Dorsolateral prefrontal cortex (tissue), 120 donors: ENCODE measurements at regions of chr1 and their contacts with region 1.

Region 1: DNA sequence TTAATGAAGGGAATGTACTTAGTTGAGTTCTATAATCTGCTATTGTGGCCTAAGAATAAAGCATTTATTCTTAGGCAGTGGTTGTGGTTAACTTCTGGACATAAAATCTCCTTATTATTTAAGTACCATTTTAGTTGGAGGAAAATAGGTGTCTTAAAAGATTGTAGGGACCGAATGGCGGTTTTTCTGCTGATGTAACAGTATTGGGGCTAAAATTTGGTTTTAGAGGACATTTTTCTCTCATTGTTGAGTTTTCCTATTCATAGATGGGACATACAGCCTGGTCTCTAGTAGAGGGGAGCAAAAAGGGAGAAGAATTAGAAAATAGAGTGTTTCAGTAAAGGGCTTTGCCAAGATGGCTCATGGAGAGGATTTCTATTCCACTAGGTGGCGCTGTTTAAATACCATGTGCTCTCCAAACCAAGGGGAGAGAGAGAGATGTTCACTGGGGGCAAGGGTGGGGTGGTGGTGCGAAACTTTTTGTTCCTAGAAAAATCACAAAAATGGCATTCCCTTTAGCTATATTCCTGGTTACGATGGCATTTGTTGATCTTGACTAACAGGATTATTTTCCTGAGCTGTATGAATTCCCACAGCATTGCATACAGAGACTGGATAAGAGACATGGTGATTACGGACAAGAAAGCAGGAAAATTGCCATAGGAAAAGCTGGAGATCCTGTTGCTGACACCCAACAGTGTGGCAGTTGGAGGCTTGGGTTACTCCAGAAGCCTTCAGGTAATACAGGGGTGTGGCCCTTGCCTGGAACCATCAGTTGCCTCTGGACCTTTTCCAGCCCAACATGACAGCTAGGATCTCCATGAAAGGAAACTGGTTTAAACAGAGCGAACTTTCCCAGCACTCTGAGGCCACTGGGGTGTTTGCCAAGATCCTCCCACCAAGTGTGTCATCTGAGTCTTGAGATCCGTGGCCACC is 18.2 kb upstream of the FCGR2A start:
- DNase-seq: peak in 2 of 10 donors; percentile 11 to 31
- H3K4me3 ChIP-seq: peak overlapping the region in 22 of 59 donors; percentile 3 to 48 (median 27)
- H3K27ac ChIP-seq: peak overlapping the region in 1 of 59 donors; percentile 15
- H3K27me3 ChIP-seq: peaks cover 0 to 71% (median 14%) of the 10 kb centered on the region in 45 donors
- CTCF ChIP-seq: peak; percentile 60 to 90 (median 82)

Region 2: DNA sequence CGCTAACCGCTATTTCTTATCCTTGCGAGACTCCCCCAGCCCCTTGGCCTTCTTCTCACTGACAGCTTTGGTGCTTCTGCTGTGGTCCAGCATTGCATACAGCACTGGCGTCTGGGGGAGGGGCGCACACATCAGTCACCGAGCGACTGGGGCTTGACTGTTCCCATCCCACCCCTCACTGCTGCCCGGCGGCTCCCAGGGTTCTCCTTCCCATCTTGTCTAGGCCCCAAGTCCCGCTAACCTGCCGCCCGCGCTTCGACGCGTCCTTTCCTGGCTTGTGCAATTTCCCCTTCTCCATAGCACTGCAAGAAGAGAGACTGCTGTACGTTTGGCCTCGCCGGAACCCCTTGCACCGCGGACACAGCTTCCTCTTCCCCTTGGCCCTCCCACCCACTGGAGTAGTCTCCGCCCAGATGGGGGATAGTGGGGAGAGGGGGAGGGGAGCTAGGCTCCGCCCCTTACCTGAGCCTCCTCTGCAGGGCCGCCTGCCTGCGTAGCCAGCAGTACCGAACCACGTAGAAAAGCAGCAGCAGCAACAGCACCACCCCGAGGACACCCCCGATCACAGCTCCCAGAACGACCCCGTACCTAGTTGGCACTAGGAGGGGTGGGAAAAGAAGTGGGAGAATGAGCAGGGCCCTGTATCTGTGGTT is 181.1 kb before region 1 on chr1:
- intact Hi-C with region 1: no loop called
- DNase-seq: peak; percentile 53 to 90 (median 80)
- H3K4me3 ChIP-seq: peak overlapping the region; percentile 41 to 90 (median 77)
- H3K27ac ChIP-seq: peak overlapping the region in 57 of 59 donors; percentile 24 to 86 (median 74)
- H3K27me3 ChIP-seq: no peaks in the 10 kb centered on the region
- CTCF ChIP-seq: peak in 44 of 56 donors; percentile 10 to 58 (median 36)

Region 3: GRCh38 chr1:161389691-161390558 is 97.1 kb before region 1 on chr1:
- intact Hi-C with region 1: no loop called
- DNase-seq: peak; percentile 95 to 99 (median 97)
- H3K4me3 ChIP-seq: peak overlapping the region; percentile 58 to 96 (median 83)
- H3K27ac ChIP-seq: peak overlapping the region; percentile 58 to 99 (median 94)
- H3K27me3 ChIP-seq: no peaks in the 10 kb centered on the region
- CTCF ChIP-seq: peak in 9 of 56 donors; percentile 1 to 25 (median 15)

Region 4: DNA sequence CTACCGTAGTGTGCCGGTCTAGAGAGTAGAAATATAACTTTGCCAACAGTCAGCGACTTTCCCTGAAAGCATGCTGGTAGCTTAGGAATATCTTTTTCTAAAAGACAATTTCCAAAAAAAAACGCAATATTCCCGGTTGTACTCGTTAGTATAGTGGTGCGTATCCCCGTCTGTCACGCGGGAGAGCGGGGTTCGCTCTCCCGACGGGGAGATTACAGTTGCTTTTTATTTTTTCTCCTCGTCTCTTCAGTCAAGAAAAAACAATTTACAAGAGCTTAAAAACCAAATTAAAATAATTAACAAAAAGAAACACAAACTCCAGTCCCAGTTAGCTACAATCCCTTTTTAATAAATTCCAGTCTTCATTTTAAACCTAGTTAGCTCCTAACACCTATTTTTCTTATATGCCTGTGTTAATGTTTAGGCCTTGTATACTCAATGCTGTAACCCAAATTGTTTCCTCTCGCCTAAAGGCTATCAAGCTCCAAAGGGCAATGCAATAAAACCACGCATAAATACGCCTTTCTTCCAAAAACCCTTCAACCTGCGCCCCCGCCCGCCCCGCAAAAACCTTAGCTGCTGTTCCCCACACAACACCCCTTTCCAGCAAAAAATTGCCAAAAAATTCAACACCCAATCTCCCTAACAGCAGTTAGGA is 45.0 kb after region 1 on chr1:
- intact Hi-C with region 1: loop called in 1 of 2 experiments (anchors 10 kb)
- DNase-seq: no peak
- H3K4me3 ChIP-seq: peak overlapping the region; percentile 26 to 88 (median 69)
- H3K27ac ChIP-seq: peak overlapping the region in 57 of 59 donors; percentile 63 to 99 (median 94)
- H3K27me3 ChIP-seq: no peaks in the 10 kb centered on the region
- CTCF ChIP-seq: peak in 1 of 56 donors; percentile 4

Region 5: GRCh38 chr1:161749509-161750407 is 262.7 kb after region 1 on chr1 and contains the start of gene DUSP12:
- intact Hi-C with region 1: loop called (anchors 10 kb)
- DNase-seq: peak; percentile 82 to 96 (median 94)
- H3K4me3 ChIP-seq: peak within 1 kb of the TSS; percentile 66 to 100 (median 91)
- H3K27ac ChIP-seq: peak within 1 kb of the TSS; percentile 26 to 98 (median 93)
- H3K27me3 ChIP-seq: no peaks in the 10 kb centered on the region
- CTCF ChIP-seq: peak in 53 of 56 donors; percentile 17 to 67 (median 40)
- total RNA-seq, gene DUSP12: 12.6 to 34.3 (median 21.6) TPM

Region 6: GRCh38 chr1:161836018-161836417 is 348.9 kb after region 1 on chr1:
- intact Hi-C with region 1: no loop called
- DNase-seq: no peak
- H3K4me3 ChIP-seq: no peak overlapping the region
- H3K27ac ChIP-seq: no peak overlapping the region
- H3K27me3 ChIP-seq: no peaks in the 10 kb centered on the region
- CTCF ChIP-seq: no peak